ENCODE measurements at regions of chr11 and their contacts with region 1.

Region 1: DNA sequence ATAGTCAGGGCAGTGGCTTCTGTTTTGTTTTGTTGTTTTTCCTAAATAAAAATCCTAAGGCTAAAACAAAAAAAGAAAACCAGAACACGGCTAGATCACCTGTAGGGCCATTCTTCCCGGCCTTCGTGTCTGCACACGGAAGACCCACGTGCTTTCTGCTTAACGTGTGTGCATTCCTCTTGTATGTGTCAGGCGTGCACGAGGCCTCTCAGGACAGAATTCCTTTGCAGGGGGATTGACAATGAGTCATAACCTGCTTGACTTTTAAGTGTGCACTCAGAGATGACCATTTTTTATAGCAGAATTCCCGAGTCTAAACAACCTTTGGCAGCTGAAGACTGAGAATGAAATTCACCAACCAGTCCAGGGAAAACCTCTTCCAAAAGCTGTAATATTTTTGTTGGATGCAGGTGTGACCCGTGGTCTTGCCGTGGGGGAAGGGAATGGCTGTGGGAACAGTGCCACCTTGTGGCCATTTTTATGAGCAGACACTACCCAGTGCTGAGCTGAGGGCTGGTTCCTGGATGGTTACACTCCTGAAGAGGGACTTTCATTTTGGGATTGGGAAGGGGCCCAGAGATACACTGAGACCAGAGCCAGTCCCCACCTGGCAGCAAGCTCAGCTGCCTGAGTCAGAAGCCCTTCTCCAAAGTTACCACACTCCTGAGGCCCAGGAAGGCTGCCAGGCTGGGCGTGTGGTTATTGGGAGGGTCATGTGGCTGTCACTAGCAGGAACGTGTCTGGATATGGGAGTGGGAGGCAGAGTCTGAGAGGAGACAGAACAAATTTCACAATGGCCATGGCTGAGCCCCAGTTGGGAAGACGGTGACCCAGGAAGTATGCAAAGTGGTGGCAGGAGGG is 35.8 kb upstream of the DKK3 start:
- DNase-seq: peak; percentile 70 to 81
- ATAC-seq: peak; percentile 88 to 93 (median 92)
- H3K4me3 ChIP-seq: peak overlapping the region in 1 of 10 donors; percentile 1
- H3K27ac ChIP-seq: peak overlapping the region in 9 of 10 donors; percentile 21 to 73 (median 52)
- H3K4me1 ChIP-seq: peaks cover 4 to 28% (median 19%) of the 10 kb centered on the region in 9 donors
- H3K27me3 ChIP-seq: no peaks in the 10 kb centered on the region
- CTCF ChIP-seq: peak; percentile 84 to 96 (median 95)

Region 2: DNA sequence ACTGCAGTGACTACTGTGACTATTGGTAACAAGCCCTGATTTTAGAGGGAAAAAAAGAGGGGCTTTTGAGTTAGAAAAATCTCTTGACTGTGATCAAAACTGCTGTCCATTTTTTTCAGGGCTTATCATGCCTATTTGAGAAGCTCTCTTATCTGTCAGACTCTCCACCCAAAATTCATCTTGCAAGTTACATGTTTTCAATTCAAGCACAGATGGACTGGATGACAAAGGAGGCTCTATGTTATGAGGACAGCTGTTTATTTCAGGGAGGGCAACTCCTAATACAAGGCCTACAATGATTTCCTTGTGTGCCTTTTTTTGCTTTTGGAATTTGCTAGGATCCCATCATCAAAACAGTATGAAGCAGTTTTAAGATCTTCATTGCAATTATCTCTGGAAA is 237.6 kb before region 1 on chr11:
- intact Hi-C with region 1: loop called in 3 of 10 experiments (anchors 5 kb)
- DNase-seq: no peak
- ATAC-seq: peak in 4 of 8 donors; percentile 45 to 65 (median 56)
- H3K4me3 ChIP-seq: no peak overlapping the region
- H3K27ac ChIP-seq: peak overlapping the region in 4 of 10 donors; percentile 34 to 62 (median 52)
- H3K4me1 ChIP-seq: peaks cover 0 to 20% (median 14%) of the 10 kb centered on the region in 9 donors
- H3K27me3 ChIP-seq: no peaks in the 10 kb centered on the region
- CTCF ChIP-seq: no peak

Region 3: GRCh38 chr11:11931461-11932055 is 112.6 kb before region 1 on chr11:
- intact Hi-C with region 1: loop called (anchors 1 to 5 kb)
- DNase-seq: peak in 1 of 2 donors; percentile 27
- ATAC-seq: peak in 6 of 8 donors; percentile 55 to 73 (median 63)
- H3K4me3 ChIP-seq: no peak overlapping the region
- H3K27ac ChIP-seq: no peak overlapping the region
- H3K4me1 ChIP-seq: peaks cover 0 to 6% (median 0%) of the 10 kb centered on the region in 9 donors
- H3K27me3 ChIP-seq: no peaks in the 10 kb centered on the region
- CTCF ChIP-seq: peak; percentile 40 to 79 (median 73)

Region 4: GRCh38 chr11:11966826-11967668 is 77.1 kb before region 1 on chr11:
- intact Hi-C with region 1: loop called in 2 of 10 experiments (anchors 5 kb)
- DNase-seq: peak; percentile 74 to 80
- ATAC-seq: peak in 7 of 8 donors; percentile 35 to 70 (median 64)
- H3K4me3 ChIP-seq: no peak overlapping the region
- H3K27ac ChIP-seq: peak overlapping the region in 2 of 10 donors; percentile 19 to 32
- H3K4me1 ChIP-seq: peaks cover 4 to 85% (median 55%) of the 10 kb centered on the region in 9 donors
- H3K27me3 ChIP-seq: no peaks in the 10 kb centered on the region
- CTCF ChIP-seq: peak; percentile 73 to 84 (median 80)

Region 5: GRCh38 chr11:12235947-12236743 is 192.0 kb after region 1 on chr11:
- intact Hi-C with region 1: loop called in 8 of 10 experiments (anchors 1 to 5 kb)
- DNase-seq: no peak
- ATAC-seq: peak; percentile 10 to 67 (median 50)
- H3K4me3 ChIP-seq: no peak overlapping the region
- H3K27ac ChIP-seq: peak overlapping the region in 8 of 10 donors; percentile 24 to 74 (median 50)
- H3K4me1 ChIP-seq: peaks cover 6 to 77% (median 44%) of the 10 kb centered on the region in 9 donors
- H3K27me3 ChIP-seq: no peaks in the 10 kb centered on the region
- CTCF ChIP-seq: peak; percentile 48 to 81 (median 75)

Region 6: GRCh38 chr11:12888525-12889158 is 844.5 kb after region 1 on chr11:
- intact Hi-C with region 1: no loop called
- DNase-seq: peak; percentile 85 to 90
- ATAC-seq: peak; percentile 75 to 91 (median 84)
- H3K4me3 ChIP-seq: no peak overlapping the region
- H3K27ac ChIP-seq: peak overlapping the region in 9 of 10 donors; percentile 48 to 83 (median 65)
- H3K4me1 ChIP-seq: peaks cover 10 to 50% (median 30%) of the 10 kb centered on the region in 9 donors
- H3K27me3 ChIP-seq: no peaks in the 10 kb centered on the region
- CTCF ChIP-seq: peak; percentile 63 to 87 (median 76)

Measured in heart right ventricle (tissue), 16 donors.